ENCODE measurements at regions of chr11 and their contacts with region 1.

Region 1: GRCh38 chr11:128905345-128906184 is 14.4 kb downstream of the KCNJ5 start:
- DNase-seq: peak; percentile 75
- H3K4me3 Mint-ChIP-seq: peak overlapping the region; percentile 72
- H3K27ac Mint-ChIP-seq: no peak overlapping the region
- H3K4me1 Mint-ChIP-seq: peaks cover 12% of the 10 kb centered on the region
- H3K27me3 Mint-ChIP-seq: peaks cover 77% of the 10 kb centered on the region

Region 2: GRCh38 chr11:128890543-128891368 is 14.8 kb before region 1 on chr11 and contains the start of gene KCNJ5:
- intact Hi-C with region 1: loop called (anchors 2 kb)
- DNase-seq: no peak
- H3K4me3 Mint-ChIP-seq: peak within 1 kb of the TSS; percentile 75
- H3K27ac Mint-ChIP-seq: no peak within 1 kb of the TSS
- H3K4me1 Mint-ChIP-seq: peaks cover 8% of the 10 kb centered on the region
- H3K27me3 Mint-ChIP-seq: peaks cover 70% of the 10 kb centered on the region
- total RNA-seq, gene KCNJ5: not detected in 2 replicates

Region 3: DNA sequence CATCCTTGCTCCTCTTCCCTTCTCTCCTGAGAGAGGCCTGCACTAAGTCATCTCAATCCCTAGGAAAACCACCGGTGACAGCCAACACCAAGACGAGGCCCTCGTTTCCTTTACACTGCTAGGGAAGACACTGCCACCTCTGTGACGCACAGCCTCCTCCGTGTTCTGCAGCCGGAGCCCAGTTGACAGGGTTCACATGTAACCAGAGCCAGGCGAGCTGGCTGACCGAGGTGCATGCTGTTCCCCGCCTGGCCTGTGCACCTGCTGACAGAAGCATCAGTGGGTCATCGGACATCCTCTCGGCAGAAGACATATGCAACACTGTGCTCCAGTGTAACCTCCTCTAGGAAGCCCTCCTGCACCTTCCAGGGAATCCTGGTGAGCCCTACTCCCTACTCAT is 151.3 kb after region 1 on chr11:
- intact Hi-C with region 1: loop called (anchors 10 kb)
- DNase-seq: no peak
- H3K4me3 Mint-ChIP-seq: no peak overlapping the region
- H3K27ac Mint-ChIP-seq: no peak overlapping the region
- H3K4me1 Mint-ChIP-seq: no peaks in the 10 kb centered on the region
- H3K27me3 Mint-ChIP-seq: no peaks in the 10 kb centered on the region